ENCODE measurements at regions of chr5 and their contacts with region 1.

Region 1: GRCh38 chr5:111537141-111538024 is 25.0 kb upstream of the STARD4 start:
- DNase-seq: no peak
- H3K4me3 ChIP-seq: no peak overlapping the region
- H3K27ac ChIP-seq: no peak overlapping the region
- H3K4me1 ChIP-seq: no peaks in the 10 kb centered on the region
- H3K27me3 ChIP-seq: no peaks in the 10 kb centered on the region
- CTCF ChIP-seq: no peak
- POLR2A ChIP-seq: no peak

Region 2: GRCh38 chr5:112136773-112137172 is 599.4 kb after region 1 on chr5:
- intact Hi-C with region 1: loop called (anchors 5 kb)
- DNase-seq: no peak
- H3K4me3 ChIP-seq: no peak overlapping the region
- H3K27ac ChIP-seq: no peak overlapping the region
- H3K4me1 ChIP-seq: no peaks in the 10 kb centered on the region
- H3K27me3 ChIP-seq: no peaks in the 10 kb centered on the region
- CTCF ChIP-seq: no peak
- POLR2A ChIP-seq: no peak

Region 3: DNA sequence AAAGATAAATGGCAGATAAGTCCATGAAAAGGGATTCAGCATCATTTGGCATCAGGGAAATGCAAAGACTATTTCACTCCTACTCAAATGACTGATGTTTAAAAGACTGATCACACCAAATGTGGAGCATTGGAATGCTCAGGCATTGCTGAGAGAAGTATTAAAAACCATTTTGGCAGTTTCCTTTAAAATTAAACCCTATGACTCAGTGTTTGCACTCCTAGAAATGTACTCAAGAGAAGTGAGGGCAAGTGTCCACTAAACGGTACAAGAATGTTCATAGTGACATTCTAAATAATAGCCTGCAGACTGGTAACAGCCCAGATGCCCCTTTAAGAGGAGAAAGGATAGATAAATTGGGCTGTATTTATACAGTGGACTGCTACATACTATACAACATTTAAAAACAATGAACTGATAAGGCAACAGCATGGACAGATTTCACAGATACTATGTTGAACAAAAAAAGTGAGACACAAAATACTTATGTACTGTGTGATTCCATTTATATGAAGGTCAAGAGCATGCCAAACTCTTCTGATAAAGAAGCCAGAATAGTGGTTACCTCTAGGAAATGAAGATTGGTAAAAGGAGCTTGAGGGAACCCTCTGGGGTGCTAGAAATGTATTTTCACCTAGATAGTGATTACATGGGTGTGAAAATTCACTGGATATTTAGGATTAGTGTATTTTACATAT is 1224.9 kb after region 1 on chr5:
- intact Hi-C with region 1: no loop called
- DNase-seq: no peak
- H3K4me3 ChIP-seq: no peak overlapping the region
- H3K27ac ChIP-seq: no peak overlapping the region
- H3K4me1 ChIP-seq: no peaks in the 10 kb centered on the region
- H3K27me3 ChIP-seq: no peaks in the 10 kb centered on the region
- CTCF ChIP-seq: no peak
- POLR2A ChIP-seq: no peak

Measured in breast epithelium (tissue), 4 donors.